ENCODE measurements at regions of chr7 and their contacts with region 1.

Region 1: DNA sequence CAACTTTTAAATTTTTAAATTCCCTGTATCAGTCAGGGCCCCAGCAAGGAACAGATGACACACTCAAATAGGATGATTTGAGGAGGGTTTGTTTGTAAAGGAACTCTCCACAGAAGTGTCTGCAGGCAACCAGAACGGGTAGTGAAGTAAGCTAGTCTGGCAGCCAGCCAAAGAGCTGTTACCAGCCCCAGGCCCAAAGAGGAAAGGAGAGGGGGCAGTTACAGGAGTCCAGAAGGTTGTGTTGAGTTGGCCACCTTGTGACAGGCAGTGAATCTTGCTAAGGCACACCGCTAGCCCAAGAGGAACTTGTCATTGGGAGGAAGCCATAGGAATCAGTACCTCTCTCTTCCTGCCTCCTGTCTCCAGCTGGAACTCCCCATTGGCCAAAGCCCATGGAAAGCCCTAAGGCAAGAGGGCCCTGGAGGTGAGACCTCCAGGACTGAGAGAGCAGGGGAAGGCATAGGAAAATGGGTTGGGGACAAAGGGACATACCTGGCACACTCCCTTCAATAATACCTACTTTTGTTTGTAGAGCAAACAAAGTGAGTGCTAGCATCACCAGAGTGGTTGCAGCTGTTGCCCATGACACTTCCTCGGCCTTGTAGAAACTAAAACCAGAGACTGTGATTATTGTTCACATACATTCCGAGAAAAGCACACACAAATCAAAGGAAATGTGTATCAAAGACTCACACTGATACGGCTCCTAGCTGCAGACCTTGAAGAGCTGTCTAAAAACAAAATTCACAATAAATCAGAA is 25.4 kb upstream of the GATAD1 start:
- DNase-seq: no peak
- H3K4me3 Mint-ChIP-seq: no peak overlapping the region
- H3K27ac Mint-ChIP-seq: no peak overlapping the region
- H3K4me1 Mint-ChIP-seq: peaks cover 14% of the 10 kb centered on the region
- H3K27me3 Mint-ChIP-seq: peaks cover 4% of the 10 kb centered on the region

Region 2: DNA sequence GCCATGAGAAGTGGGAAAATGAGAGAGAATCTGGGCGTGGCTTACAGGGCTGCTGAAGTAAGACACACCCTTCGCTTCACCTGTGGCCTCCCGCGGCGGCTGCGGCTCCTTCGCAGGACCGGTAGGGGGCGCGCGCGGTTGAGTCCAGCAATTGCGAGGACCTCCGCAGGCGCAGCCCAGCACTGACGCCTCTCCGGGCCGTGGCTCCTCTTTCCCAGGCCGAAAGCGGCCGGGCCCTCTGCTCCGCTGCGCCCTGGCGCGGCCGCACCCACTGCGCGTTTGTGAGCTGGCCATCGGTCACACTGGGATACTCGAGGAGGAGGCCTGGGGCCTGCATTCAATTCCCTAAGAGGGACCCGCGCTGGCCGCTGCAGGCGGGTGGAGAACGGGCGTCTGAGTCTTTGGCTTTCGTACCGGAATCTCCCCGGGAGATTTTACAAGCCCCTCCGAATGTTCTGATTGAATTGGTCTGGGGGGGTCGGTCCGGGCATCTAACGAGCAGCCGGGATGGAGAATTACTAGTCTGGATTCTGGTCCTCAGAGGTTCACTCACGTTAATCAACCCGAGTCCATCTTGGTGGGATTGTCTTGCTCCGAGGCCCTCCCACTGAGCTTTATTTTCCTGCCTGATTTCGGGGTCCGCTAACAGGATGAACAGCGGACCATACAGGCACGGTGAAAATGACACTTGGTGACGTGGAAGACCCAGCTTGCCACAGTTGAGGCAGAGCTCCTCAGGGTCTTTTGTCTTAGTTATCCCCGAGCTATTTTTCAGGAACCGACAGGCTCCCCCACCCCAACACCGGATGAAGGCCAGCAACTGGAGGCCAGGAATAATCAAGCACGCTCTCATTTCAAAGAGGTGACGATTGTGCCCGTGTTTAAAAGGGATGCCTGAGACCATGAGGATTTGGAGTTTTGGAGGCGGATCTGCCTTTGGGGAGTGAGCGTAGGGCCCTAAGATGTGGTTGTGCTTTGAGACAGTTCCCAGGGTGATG is 242.6 kb before region 1 on chr7 and contains the start of gene LRRD1:
- intact Hi-C with region 1: loop called (anchors 1 kb)
- DNase-seq: peak; percentile 85
- H3K4me3 Mint-ChIP-seq: peak within 1 kb of the TSS; percentile 69
- H3K27ac Mint-ChIP-seq: no peak within 1 kb of the TSS
- H3K4me1 Mint-ChIP-seq: peaks cover 9% of the 10 kb centered on the region
- H3K27me3 Mint-ChIP-seq: peaks cover 27% of the 10 kb centered on the region
- total RNA-seq, gene LRRD1: 0.09 TPM in 1 of 2 replicates, not detected in the other

Region 3: GRCh38 chr7:92461027-92462003 is 39.5 kb after region 1 on chr7:
- intact Hi-C with region 1: no loop called
- DNase-seq: peak; percentile 13
- H3K4me3 Mint-ChIP-seq: no peak overlapping the region
- H3K27ac Mint-ChIP-seq: no peak overlapping the region
- H3K4me1 Mint-ChIP-seq: no peaks in the 10 kb centered on the region
- H3K27me3 Mint-ChIP-seq: no peaks in the 10 kb centered on the region

Region 4: GRCh38 chr7:92717993-92718716 is 296.3 kb after region 1 on chr7:
- intact Hi-C with region 1: no loop called
- DNase-seq: peak; percentile 71
- H3K4me3 Mint-ChIP-seq: peak overlapping the region; percentile 80
- H3K27ac Mint-ChIP-seq: peak overlapping the region; percentile 97
- H3K4me1 Mint-ChIP-seq: peaks cover 66% of the 10 kb centered on the region
- H3K27me3 Mint-ChIP-seq: no peaks in the 10 kb centered on the region